Esophagus muscularis mucosa (tissue), 4 donors: ENCODE measurements at regions of chr19 and their contacts with region 1.

Region 1: DNA sequence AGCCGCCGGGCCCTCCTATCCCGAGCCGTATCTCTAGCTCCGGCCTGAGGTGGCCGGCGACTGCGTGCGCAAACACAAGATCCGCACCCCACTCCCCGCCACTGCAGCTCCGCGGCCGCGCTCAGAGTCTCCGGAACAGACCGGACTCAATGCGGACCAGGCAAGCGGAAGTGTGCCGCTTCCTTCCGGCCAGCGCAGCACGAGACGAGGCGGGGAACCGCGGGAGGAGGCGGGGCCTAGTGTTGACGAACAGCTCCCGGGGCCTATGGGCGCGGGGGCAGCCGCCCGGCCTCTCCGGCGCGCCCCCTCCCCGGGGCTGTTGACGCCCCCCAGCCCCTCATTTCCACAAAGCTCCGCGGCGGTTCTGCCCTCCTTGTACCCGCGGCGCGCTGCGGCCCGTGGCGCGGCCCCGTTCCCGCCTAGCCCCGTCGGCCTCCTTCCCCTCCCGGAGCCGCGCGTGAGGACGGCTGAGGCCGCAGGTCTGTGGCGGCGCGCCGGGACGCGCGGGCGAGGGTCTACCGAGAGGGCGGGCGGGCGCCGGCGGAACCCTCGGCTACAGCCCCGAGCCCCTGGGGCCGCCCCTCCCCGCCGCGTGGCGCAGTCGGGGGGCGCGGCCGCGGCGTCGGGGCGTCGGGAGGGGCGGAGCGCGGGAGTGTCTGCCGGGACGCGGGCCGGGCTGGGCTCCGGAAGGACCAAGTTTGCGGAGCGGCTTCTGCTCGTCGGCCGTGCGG is at the start of gene DPY19L3:
- DNase-seq: peak; percentile 99
- H3K4me3 ChIP-seq: peak within 1 kb of the TSS; percentile 82 to 99 (median 94)
- H3K27ac ChIP-seq: peak within 1 kb of the TSS; percentile 96 to 100 (median 99)
- H3K4me1 ChIP-seq: peaks cover 0 to 24% (median 21%) of the 10 kb centered on the region in 4 donors
- H3K27me3 ChIP-seq: no peaks in the 10 kb centered on the region
- CTCF ChIP-seq: no peak
- EP300 ChIP-seq: no peak
- POLR2A ChIP-seq: peak; percentile 87
- total RNA-seq, gene DPY19L3: 13.6 to 16.4 (median 14.6) TPM

Region 2: GRCh38 chr19:32345261-32346207 is 60.1 kb before region 1 on chr19 and contains the start of gene ZNF507:
- intact Hi-C with region 1: loop called (anchors 5 kb)
- DNase-seq: peak; percentile 94
- H3K4me3 ChIP-seq: peak within 1 kb of the TSS; percentile 94 to 95 (median 95)
- H3K27ac ChIP-seq: peak within 1 kb of the TSS; percentile 76 to 91 (median 84)
- H3K4me1 ChIP-seq: peaks cover 19 to 49% (median 43%) of the 10 kb centered on the region in 4 donors
- H3K27me3 ChIP-seq: no peaks in the 10 kb centered on the region
- CTCF ChIP-seq: peak in 1 of 3 experiments; percentile 22
- EP300 ChIP-seq: no peak
- POLR2A ChIP-seq: no peak
- total RNA-seq, gene ZNF507: 12.6 to 19.1 (median 17.9) TPM

Region 3: GRCh38 chr19:32570081-32570785 is 164.6 kb after region 1 on chr19:
- intact Hi-C with region 1: loop called (anchors 10 kb)
- DNase-seq: no peak
- H3K4me3 ChIP-seq: no peak overlapping the region
- H3K27ac ChIP-seq: no peak overlapping the region
- H3K4me1 ChIP-seq: no peaks in the 10 kb centered on the region
- H3K27me3 ChIP-seq: peaks cover 0 to 44% (median 0%) of the 10 kb centered on the region in 4 donors
- CTCF ChIP-seq: peak; percentile 37 to 56 (median 50)
- EP300 ChIP-seq: no peak
- POLR2A ChIP-seq: no peak